Activated T-helper 2 cell treated with anti-CD3 and anti-CD28 coated beads, Interferon-gamma antibody, Interleukin-2, Interleukin-4, amounts not matched to agents 10 μg/mL and 5 μg/mL and 100 μg/mL, durations not matched to agents 14 hours and 24 hours and 36 hours (primary cell): ENCODE measurements at regions of chr3 and their contacts with region 1.

Region 1: GRCh38 chr3:15309662-15310335 is 22.6 kb downstream of the SH3BP5 start:
- DNase-seq: no peak
- H3K4me3 Mint-ChIP-seq: peak overlapping the region; percentile 48
- H3K27ac Mint-ChIP-seq: peak overlapping the region; percentile 94
- H3K4me1 Mint-ChIP-seq: peaks cover 52% of the 10 kb centered on the region
- H3K27me3 Mint-ChIP-seq: no peaks in the 10 kb centered on the region

Region 2: DNA sequence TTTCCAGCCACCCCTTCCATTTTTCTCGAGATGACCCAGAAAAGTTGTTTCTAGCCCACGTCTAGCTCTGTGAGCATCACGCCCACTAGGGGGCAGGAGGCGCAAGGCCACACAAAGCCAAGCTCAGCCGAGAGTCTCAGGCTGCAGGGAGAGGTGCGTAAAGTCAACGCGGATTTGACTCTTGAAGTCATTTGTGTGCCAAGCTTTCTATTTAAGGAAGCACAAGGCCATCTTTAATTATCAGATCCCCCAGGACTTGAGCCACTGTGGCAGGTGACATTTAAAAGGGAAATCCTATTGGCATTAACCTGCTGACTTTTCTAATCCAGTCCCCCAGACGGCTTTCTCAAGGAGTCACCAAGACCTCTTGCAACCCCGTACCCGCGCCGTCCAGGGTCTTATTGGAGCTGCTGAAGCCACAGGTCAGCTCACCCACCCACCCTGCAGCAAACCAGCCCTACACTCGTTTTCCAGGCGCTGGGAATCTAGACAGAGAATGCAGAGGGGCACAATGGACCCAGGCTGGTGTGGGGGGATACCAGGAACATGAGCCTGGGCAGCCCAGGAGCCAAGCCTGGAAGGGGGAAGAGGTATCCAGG is 41.7 kb before region 1 on chr3:
- intact Hi-C with region 1: loop called (anchors 1 kb)
- DNase-seq: peak; percentile 75
- H3K4me3 Mint-ChIP-seq: no peak overlapping the region
- H3K27ac Mint-ChIP-seq: no peak overlapping the region
- H3K4me1 Mint-ChIP-seq: peaks cover 41% of the 10 kb centered on the region
- H3K27me3 Mint-ChIP-seq: no peaks in the 10 kb centered on the region

Region 3: DNA sequence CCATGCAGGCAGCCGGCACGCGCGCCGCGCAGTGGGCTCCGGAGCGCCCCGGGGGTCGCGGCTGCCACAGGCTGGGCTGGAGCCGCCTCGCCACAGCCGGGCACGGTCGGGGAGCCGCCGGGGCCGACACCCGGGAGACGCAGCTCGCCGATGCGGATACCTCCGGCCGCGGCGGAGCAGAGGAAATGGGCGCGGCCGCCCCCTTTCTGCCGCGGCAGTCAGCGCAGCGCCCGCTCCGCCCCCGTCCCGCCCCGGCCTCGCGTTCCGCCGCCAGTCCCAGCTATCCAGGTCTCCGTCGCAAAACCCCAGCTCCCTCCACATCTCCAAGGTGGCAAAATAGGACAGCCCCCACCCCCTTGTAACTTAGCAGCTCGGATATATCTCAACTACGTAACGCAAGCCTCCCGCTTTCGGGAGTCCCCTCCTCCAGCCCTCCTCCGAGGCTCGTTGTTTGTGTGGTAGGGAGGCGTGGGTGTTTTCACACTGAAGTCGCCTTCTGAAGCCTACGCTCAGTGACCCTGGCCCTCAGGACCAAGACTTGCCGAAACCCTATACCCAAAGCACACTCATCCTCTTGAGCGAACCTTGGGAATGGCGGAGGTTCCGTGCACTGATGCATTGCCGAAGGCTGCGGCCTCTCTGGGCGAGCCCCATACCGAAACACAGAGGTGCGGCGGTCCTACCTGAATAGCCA is 22.8 kb after region 1 on chr3 and contains the start of gene SH3BP5:
- intact Hi-C with region 1: loop called (anchors 1 kb)
- DNase-seq: peak; percentile 68
- H3K4me3 Mint-ChIP-seq: peak within 1 kb of the TSS; percentile 90
- H3K27ac Mint-ChIP-seq: peak within 1 kb of the TSS; percentile 77
- H3K4me1 Mint-ChIP-seq: peaks cover 45% of the 10 kb centered on the region
- H3K27me3 Mint-ChIP-seq: peaks cover 2% of the 10 kb centered on the region
- total RNA-seq, gene SH3BP5: 14.8 and 15.0 TPM in 2 replicates

Region 4: DNA sequence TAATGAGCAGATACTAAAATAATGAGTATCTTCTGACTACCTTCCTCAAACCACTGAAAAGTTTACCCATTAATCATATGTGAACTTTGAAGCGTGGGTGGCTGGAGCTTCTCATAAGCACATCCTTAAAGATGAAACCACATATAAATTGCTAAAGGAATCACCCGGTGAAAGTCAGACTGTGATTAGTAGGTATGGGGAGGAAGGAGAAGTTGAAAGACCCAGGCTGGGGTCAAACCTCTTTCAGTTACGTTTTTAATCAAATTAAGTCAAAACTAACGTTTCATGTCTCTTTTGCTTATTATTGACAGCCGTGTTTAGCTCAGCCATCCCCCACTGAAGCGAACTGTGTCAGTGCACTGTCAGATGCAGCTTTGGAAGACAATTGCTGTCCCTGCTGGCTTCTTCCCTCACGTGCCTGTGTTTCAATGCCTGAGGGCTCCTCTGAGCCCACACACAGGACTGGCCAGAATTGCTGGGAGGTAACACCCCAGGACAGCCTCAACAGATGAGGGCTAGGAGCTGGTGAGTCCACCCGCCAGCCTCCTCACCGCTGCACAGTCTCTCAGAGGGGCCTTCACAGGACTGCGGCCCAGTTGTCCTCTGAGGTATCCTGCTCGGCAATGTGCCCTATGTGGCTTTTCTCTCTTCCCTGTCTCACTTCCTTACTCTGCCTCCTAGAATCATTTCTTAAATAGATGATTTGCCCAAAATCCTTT is 51.9 kb after region 1 on chr3:
- intact Hi-C with region 1: loop called (anchors 1 kb)
- DNase-seq: peak; percentile 36
- H3K4me3 Mint-ChIP-seq: peak overlapping the region; percentile 30
- H3K27ac Mint-ChIP-seq: peak overlapping the region; percentile 81
- H3K4me1 Mint-ChIP-seq: peaks cover 36% of the 10 kb centered on the region
- H3K27me3 Mint-ChIP-seq: no peaks in the 10 kb centered on the region